ENCODE measurements at regions of chr17 and their contacts with region 1.

Region 1: GRCh38 chr17:77783991-77784820 is 174.3 kb upstream of the TNRC6C start:
- DNase-seq: peak; percentile 88
- H3K4me3 Mint-ChIP-seq: no peak overlapping the region
- H3K27ac Mint-ChIP-seq: peak overlapping the region; percentile 75
- H3K4me1 Mint-ChIP-seq: peaks cover 17% of the 10 kb centered on the region
- H3K27me3 Mint-ChIP-seq: no peaks in the 10 kb centered on the region

Region 2: GRCh38 chr17:77882481-77883212 is 98.4 kb after region 1 on chr17:
- CTCF ChIA-PET with region 1: no interaction called
- intact Hi-C with region 1: loop called (anchors 2 kb)
- DNase-seq: peak; percentile 94
- H3K4me3 Mint-ChIP-seq: peak overlapping the region; percentile 54
- H3K27ac Mint-ChIP-seq: peak overlapping the region; percentile 88
- H3K4me1 Mint-ChIP-seq: peaks cover 87% of the 10 kb centered on the region
- H3K27me3 Mint-ChIP-seq: no peaks in the 10 kb centered on the region